A673 (cell line): ENCODE measurements at regions of chr3 and their contacts with region 1.

Region 1: GRCh38 chr3:105691633-105692032 is 177.2 kb downstream of the CBLB start:
- DNase-seq: no peak
- H3K4me3 ChIP-seq: no peak overlapping the region
- H3K27ac ChIP-seq: no peak overlapping the region
- H3K4me1 ChIP-seq: peaks cover 24% of the 10 kb centered on the region
- H3K27me3 ChIP-seq: no peaks in the 10 kb centered on the region
- CTCF ChIP-seq: no peak

Region 2: DNA sequence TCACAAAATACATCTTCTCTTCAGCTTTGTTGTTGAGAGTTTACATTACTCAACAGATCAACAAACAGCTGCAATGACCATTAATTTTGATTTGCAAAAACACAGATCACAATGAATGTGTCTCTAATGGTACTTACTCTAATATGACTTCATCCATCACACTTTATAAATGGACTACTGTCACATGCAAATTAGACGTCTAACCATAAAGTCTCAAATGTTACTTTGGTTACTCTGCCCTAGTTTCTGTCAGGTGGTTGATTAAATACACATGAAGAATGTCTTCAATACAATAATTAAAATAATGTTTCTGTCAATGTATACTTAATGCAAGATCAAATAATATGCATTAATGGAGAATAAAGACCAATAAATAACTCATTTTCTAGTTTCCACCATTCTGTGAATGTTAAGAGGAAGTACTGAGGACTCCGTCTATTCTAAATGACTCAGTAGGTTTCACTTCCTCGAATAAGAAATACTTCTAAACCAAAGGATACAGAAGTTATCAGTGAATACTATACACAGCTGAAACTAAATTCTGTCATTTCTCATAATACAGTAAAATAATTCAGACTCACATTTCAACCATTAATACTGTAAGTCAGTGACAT is 31.4 kb after region 1 on chr3:
- CTCF ChIA-PET with region 1: no interaction called
- POLR2A ChIA-PET with region 1: no interaction called
- intact Hi-C with region 1: no loop called
- DNase-seq: no peak
- H3K4me3 ChIP-seq: no peak overlapping the region
- H3K27ac ChIP-seq: no peak overlapping the region
- H3K4me1 ChIP-seq: no peaks in the 10 kb centered on the region
- H3K27me3 ChIP-seq: no peaks in the 10 kb centered on the region
- CTCF ChIP-seq: no peak

Region 3: GRCh38 chr3:105868742-105869530 is 177.3 kb after region 1 on chr3 and contains the start of gene CBLB:
- CTCF ChIA-PET with region 1: no interaction called
- POLR2A ChIA-PET with region 1: no interaction called
- intact Hi-C with region 1: loop called (anchors 5 kb)
- DNase-seq: peak; percentile 96
- H3K4me3 ChIP-seq: peak within 1 kb of the TSS; percentile 88
- H3K27ac ChIP-seq: peak within 1 kb of the TSS; percentile 87
- H3K4me1 ChIP-seq: peaks cover 34% of the 10 kb centered on the region
- H3K27me3 ChIP-seq: no peaks in the 10 kb centered on the region
- CTCF ChIP-seq: no peak
- total RNA-seq, gene CBLB: 23.3 and 27.9 TPM in 2 replicates